Natural killer cell (primary cell): ENCODE measurements at regions of chr10 and their contacts with region 1.

Region 1: DNA sequence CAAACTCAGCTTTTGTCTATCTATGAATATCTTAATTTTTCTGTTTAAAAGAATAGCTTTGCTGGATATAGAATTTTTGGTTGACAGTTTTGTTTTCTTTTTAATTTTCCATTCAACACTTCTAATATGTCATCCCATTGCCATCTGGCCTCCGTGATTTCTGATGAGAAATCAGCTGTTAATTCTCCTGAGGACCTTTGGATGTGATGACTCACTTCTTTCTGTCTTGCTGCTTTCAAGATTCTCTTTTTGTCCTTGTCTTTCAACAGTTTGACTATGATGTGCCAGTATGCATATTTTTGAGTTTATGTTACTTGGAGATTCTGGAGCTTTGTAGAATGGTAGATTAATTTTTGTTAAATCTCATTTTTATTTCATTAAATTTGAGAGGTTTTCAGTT is 38.4 kb downstream of the ZNF518A start:
- DNase-seq: no peak
- ATAC-seq: no peak
- H3K4me3 ChIP-seq: no peak overlapping the region
- H3K4me3 Mint-ChIP-seq: no peak overlapping the region
- H3K27ac ChIP-seq: no peak overlapping the region
- H3K27ac Mint-ChIP-seq: no peak overlapping the region
- H3K4me1 ChIP-seq: no peaks in the 10 kb centered on the region
- H3K4me1 Mint-ChIP-seq: no peaks in the 10 kb centered on the region
- H3K27me3 ChIP-seq: no peaks in the 10 kb centered on the region
- H3K27me3 Mint-ChIP-seq: no peaks in the 10 kb centered on the region
- CTCF ChIP-seq: no peak

Region 2: GRCh38 chr10:95998255-95998784 is 170.2 kb before region 1 on chr10:
- intact Hi-C with region 1: no loop called
- DNase-seq: no peak
- ATAC-seq: no peak
- H3K4me3 ChIP-seq: no peak overlapping the region
- H3K4me3 Mint-ChIP-seq: no peak overlapping the region
- H3K27ac ChIP-seq: no peak overlapping the region
- H3K27ac Mint-ChIP-seq: no peak overlapping the region
- H3K4me1 ChIP-seq: no peaks in the 10 kb centered on the region
- H3K4me1 Mint-ChIP-seq: no peaks in the 10 kb centered on the region
- H3K27me3 ChIP-seq: no peaks in the 10 kb centered on the region
- H3K27me3 Mint-ChIP-seq: no peaks in the 10 kb centered on the region
- CTCF ChIP-seq: no peak

Region 3: GRCh38 chr10:96034625-96035024 is 133.9 kb before region 1 on chr10:
- intact Hi-C with region 1: loop called (anchors 5 kb)
- DNase-seq: no peak
- ATAC-seq: no peak
- H3K4me3 ChIP-seq: no peak overlapping the region
- H3K4me3 Mint-ChIP-seq: no peak overlapping the region
- H3K27ac ChIP-seq: no peak overlapping the region
- H3K27ac Mint-ChIP-seq: no peak overlapping the region
- H3K4me1 ChIP-seq: no peaks in the 10 kb centered on the region
- H3K4me1 Mint-ChIP-seq: no peaks in the 10 kb centered on the region
- H3K27me3 ChIP-seq: no peaks in the 10 kb centered on the region
- H3K27me3 Mint-ChIP-seq: peaks cover 17 to 21% of the 10 kb centered on the region in 2 donors
- CTCF ChIP-seq: no peak

Region 4: DNA sequence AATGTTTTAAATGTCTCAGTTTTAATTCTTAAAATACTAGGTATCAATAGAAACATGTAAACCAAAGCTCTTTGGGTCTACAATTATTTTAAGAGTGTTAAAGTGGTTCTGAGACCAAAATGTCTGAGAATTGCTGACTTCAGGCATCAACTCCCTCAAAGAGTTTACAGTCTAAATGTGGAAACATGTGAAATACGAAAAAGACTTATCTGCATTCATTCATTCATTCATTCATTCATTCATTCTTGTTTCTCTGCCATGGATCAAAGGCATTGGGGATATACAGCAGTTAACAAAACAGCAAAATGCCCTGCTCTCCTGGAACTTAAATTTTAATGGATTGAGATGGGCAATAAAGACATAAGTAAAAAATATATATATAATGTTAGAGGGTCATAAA is 33.0 kb after region 1 on chr10:
- intact Hi-C with region 1: no loop called
- DNase-seq: no peak
- ATAC-seq: no peak
- H3K4me3 ChIP-seq: no peak overlapping the region
- H3K4me3 Mint-ChIP-seq: no peak overlapping the region
- H3K27ac ChIP-seq: no peak overlapping the region
- H3K27ac Mint-ChIP-seq: no peak overlapping the region
- H3K4me1 ChIP-seq: no peaks in the 10 kb centered on the region
- H3K4me1 Mint-ChIP-seq: no peaks in the 10 kb centered on the region
- H3K27me3 ChIP-seq: no peaks in the 10 kb centered on the region
- H3K27me3 Mint-ChIP-seq: peaks cover 3 to 15% of the 10 kb centered on the region in 2 donors
- CTCF ChIP-seq: no peak